ENCODE measurements at regions of chr13 and their contacts with region 1.

Region 1: DNA sequence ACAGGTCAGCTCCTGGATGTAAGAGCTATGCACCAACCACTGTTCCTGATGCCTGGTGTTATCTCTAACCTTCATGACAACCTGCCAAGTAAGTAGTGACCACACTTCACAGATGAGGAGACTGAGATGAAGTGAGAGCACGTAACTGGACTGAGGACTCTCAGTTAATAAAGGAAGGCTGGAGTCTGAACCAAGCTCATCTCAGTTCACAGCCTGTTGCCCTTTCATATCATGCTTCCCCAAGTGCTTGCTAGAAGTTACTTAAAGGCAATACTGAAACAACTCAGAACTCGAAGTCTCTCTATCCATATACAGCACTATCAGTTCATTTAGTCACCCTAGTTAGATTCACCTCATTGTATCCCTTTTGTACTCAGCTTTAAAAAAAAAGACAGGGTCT is 119.7 kb downstream of the ABCC4 start:
- DNase-seq: no peak
- H3K4me3 Mint-ChIP-seq: no peak overlapping the region
- H3K27ac Mint-ChIP-seq: no peak overlapping the region
- H3K4me1 Mint-ChIP-seq: peaks cover 43% of the 10 kb centered on the region
- H3K27me3 Mint-ChIP-seq: no peaks in the 10 kb centered on the region

Region 2: DNA sequence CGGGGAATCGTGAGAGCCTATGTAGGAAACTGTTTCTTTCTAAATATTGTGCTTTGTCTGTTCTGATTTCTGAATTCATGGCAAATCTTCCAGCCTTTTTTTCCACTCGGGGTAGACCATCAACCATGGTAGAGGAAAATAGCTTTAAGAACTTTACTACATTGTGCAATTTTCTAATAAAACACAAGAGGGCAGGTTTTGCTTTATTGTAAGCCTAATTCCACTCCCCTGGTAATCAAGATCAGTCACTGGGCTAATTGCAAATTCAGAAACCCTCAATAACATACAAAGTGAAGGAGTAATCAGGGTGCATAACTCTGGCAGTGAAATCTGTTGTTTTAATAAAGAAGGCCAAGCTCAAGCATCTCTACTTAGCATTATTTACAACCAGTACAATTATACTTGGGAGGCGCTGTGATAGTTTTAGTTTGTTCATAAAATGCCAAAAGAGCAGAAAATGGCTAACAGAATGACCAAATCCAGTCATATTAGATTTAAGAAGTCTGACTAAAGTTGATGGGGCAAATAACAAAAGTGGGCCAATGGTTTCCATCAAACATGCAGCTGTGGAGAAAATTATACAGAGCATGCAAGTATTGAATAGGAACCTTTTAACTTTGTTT is 745.9 kb before region 1 on chr13:
- intact Hi-C with region 1: loop called (anchors 10 kb)
- DNase-seq: peak; percentile 63
- H3K4me3 Mint-ChIP-seq: no peak overlapping the region
- H3K27ac Mint-ChIP-seq: no peak overlapping the region
- H3K4me1 Mint-ChIP-seq: peaks cover 9% of the 10 kb centered on the region
- H3K27me3 Mint-ChIP-seq: peaks cover 6% of the 10 kb centered on the region

Region 3: DNA sequence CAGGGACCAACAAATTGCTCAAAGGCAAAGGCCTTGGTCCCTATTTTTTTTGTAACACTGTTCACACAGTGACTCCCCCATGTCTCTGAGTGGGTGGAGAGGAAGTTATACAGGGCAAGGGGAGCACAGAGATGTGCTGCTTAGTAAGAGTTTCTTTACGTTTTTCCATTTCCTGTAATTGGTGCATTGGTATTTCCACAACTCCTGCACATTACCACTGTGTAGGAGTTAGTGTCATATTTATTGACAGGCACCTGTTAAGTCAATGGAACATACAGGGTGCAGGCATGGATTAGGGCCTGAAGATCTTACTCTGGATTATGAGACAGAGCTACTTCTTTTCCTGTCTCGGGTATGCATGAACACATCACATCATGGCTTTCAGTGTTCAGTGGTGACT is 514.4 kb before region 1 on chr13:
- intact Hi-C with region 1: loop called (anchors 2 kb)
- DNase-seq: peak; percentile 59
- H3K4me3 Mint-ChIP-seq: peak overlapping the region; percentile 39
- H3K27ac Mint-ChIP-seq: peak overlapping the region; percentile 92
- H3K4me1 Mint-ChIP-seq: peaks cover 32% of the 10 kb centered on the region
- H3K27me3 Mint-ChIP-seq: peaks cover 13% of the 10 kb centered on the region

Region 4: GRCh38 chr13:95050800-95051615 is 130.6 kb before region 1 on chr13:
- intact Hi-C with region 1: loop called (anchors 1 kb)
- DNase-seq: no peak
- H3K4me3 Mint-ChIP-seq: no peak overlapping the region
- H3K27ac Mint-ChIP-seq: peak overlapping the region; percentile 70
- H3K4me1 Mint-ChIP-seq: peaks cover 17% of the 10 kb centered on the region
- H3K27me3 Mint-ChIP-seq: no peaks in the 10 kb centered on the region

Region 5: DNA sequence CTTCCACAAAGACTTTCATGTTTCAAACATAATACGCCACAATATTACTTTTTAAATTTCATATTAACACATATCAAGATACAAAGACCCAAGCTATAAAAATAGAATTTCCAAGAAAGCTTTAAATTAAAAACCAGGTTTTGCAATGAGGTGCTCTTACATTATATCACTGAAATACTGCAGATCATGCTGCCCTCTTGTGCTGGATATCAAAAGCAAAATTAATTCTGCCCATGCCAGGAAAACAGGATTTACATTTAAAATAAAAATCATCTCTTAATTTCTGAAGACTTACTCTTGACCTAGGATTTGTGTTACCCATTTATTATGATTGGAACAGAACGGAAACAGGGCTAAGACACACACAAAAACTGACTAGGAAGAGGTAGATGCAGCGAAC is 25.4 kb before region 1 on chr13:
- intact Hi-C with region 1: loop called (anchors 2 kb)
- DNase-seq: no peak
- H3K4me3 Mint-ChIP-seq: no peak overlapping the region
- H3K27ac Mint-ChIP-seq: no peak overlapping the region
- H3K4me1 Mint-ChIP-seq: peaks cover 8% of the 10 kb centered on the region
- H3K27me3 Mint-ChIP-seq: no peaks in the 10 kb centered on the region